Activated CD4-positive, alpha-beta T cell treated with anti-CD3 and anti-CD28 coated beads, Interleukin-2, amount 10 ng/mL, durations not matched to agents 24 days and 14 days (primary cell): ENCODE measurements at regions of chr5 and their contacts with region 1.

Region 1: GRCh38 chr5:37111426-37112382 is 137.5 kb downstream of the CPLANE1 start:
- DNase-seq: peak; percentile 87
- H3K4me3 Mint-ChIP-seq: peak overlapping the region; percentile 52
- H3K27ac Mint-ChIP-seq: peak overlapping the region; percentile 78
- H3K4me1 Mint-ChIP-seq: peaks cover 34% of the 10 kb centered on the region
- H3K27me3 Mint-ChIP-seq: no peaks in the 10 kb centered on the region

Region 2: DNA sequence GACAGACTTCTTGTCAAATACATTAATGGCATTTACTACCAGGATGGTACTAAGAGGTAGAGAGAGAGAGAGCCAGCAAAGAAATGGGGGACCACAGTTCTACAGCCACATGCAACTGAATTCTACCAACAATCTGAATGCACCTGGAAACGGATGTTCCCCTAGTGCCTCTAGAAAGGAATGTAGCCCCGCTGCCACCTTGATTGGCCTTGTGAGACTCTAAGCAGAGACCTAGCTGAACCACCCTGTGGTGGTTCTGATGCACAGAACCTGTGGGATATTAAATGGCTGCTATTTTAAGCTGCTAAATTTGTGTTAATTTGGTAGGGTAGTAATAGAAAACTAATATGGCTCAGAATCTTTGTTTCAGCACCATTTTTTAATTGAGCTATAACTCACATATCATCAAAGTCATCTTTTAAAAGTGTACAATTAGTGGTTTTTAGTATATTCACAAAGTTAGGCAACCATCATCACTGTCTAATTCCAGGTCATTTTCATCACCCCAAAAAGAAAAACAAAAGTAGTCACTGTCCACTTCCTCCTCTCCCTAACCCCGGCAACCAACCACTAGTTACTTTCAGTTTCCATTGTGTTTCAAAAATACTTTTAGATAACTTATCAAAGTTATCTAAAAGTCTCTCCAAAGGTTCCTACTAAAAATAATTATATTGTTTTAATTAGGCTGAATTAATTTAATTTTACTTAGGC is 85.8 kb after region 1 on chr5:
- intact Hi-C with region 1: loop called (anchors 5 kb)
- DNase-seq: peak; percentile 75
- H3K4me3 Mint-ChIP-seq: peak overlapping the region; percentile 72
- H3K27ac Mint-ChIP-seq: peak overlapping the region; percentile 76
- H3K4me1 Mint-ChIP-seq: peaks cover 19% of the 10 kb centered on the region
- H3K27me3 Mint-ChIP-seq: no peaks in the 10 kb centered on the region

Region 3: DNA sequence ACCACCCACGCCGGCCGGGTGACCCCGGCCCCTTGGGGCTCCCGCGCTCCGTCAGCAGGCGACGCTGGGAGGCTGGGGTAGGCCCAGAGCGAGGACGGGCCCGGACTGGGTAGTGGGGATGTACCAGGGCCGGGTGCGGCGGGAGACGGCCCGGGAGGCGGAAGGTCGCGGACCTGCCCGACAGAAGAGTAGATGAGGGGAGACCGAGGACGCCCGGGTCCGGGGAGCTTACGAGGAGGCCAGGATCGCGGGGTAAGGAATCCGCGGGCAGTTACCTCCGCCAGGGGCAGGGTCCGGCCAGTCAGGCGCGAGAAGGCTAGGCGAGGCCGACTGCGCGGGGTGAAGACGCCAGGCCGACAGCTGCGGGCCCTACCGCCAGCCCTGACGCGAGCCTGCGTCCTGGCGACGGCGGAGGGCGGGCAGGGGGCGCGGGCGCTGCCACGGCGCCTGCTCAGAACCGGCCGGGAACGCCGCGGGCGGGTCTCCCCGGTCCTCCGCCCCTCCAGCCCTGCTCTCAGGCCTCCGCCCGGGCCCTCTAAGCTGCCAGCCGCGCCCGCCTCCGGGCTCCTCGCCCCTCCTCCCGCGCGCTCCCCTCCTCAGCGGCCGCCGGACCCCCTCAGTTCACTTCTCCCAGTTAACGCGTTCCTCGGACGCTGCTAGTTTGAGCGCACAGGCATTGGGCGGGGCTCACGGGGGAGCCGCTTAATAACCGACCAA is 137.4 kb after region 1 on chr5 and contains the start of gene CPLANE1:
- intact Hi-C with region 1: loop called (anchors 5 kb)
- DNase-seq: peak; percentile 89
- H3K4me3 Mint-ChIP-seq: peak within 1 kb of the TSS; percentile 88
- H3K27ac Mint-ChIP-seq: peak within 1 kb of the TSS; percentile 75
- H3K4me1 Mint-ChIP-seq: peaks cover 10% of the 10 kb centered on the region
- H3K27me3 Mint-ChIP-seq: no peaks in the 10 kb centered on the region
- total RNA-seq, gene CPLANE1: 7.6 and 7.8 TPM in 2 replicates

Region 4: GRCh38 chr5:37370864-37371726 is 259.4 kb after region 1 on chr5 and contains the start of gene NUP155:
- intact Hi-C with region 1: loop called (anchors 5 kb)
- DNase-seq: peak; percentile 97
- H3K4me3 Mint-ChIP-seq: peak within 1 kb of the TSS; percentile 91
- H3K27ac Mint-ChIP-seq: peak within 1 kb of the TSS; percentile 95
- H3K4me1 Mint-ChIP-seq: peaks cover 23% of the 10 kb centered on the region
- H3K27me3 Mint-ChIP-seq: no peaks in the 10 kb centered on the region
- total RNA-seq, gene NUP155: 85.1 and 86.2 TPM in 2 replicates

Region 5: DNA sequence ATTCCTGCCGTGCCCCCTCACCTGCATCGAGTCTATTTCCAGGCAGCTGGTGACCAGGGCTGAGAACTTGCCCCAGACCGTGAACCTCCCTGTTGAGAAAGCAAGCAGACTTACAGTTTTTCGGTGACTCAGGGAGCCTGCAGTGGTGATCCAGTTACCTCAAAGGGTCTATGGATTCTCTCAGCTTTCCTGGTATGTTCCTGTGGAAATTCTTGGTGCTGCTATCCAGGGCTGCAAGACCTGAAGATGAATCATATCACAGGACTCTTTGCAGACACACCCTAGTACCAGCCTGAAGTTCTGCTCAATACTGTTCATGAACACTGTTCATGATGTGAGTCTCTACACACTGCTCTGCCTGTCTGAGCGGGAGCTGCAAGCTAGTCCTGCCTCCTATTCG is 422.1 kb after region 1 on chr5:
- intact Hi-C with region 1: no loop called
- DNase-seq: no peak
- H3K4me3 Mint-ChIP-seq: no peak overlapping the region
- H3K27ac Mint-ChIP-seq: no peak overlapping the region
- H3K4me1 Mint-ChIP-seq: peaks cover 3% of the 10 kb centered on the region
- H3K27me3 Mint-ChIP-seq: no peaks in the 10 kb centered on the region

Region 6: DNA sequence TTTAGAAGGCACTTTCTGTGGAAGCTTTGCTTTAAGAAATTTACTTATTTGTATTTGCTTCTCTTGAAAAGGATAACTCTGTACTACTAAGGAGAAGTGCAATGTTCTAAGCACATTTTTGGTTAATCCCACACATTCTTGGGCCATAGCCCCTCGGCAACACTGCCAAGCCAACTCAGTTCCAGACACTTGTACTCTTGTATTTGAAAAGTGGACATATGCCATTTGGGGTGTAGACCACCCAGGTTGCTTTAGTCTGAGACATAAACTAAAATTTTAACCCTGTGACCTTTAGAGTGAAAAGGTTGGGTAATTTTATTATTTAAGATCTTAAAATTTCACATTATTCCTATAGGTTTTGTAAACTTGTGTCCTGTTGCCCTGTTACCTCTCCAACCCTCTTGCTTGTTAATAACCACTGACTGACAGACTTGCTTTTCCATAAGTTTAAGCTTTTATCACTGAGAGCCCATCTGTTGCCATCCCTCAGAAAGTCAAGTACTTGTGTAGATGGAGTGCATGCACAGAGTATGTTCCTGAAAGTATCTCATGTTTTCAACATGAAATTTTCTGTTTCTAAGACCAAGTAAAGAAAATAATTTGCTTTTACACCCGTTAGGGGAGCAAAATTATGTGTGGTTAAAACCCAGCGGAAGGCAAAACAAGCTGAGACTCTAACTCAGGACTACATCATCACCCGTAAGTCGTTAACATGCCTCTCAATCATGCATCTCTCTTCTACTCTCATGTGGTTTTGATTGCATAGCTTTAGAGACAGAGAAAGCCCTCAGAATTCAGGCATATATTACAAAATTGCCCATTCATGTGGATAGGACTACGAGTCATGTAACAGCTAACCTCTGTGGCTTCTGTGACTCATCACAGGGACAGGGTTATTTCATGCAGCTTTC is 610.8 kb after region 1 on chr5:
- intact Hi-C with region 1: loop called (anchors 1 kb)
- DNase-seq: peak; percentile 83
- H3K4me3 Mint-ChIP-seq: peak overlapping the region; percentile 81
- H3K27ac Mint-ChIP-seq: peak overlapping the region; percentile 95
- H3K4me1 Mint-ChIP-seq: peaks cover 29% of the 10 kb centered on the region
- H3K27me3 Mint-ChIP-seq: no peaks in the 10 kb centered on the region

Region 7: GRCh38 chr5:37738057-37738691 is 626.5 kb after region 1 on chr5:
- intact Hi-C with region 1: loop called (anchors 5 kb)
- DNase-seq: peak; percentile 75
- H3K4me3 Mint-ChIP-seq: peak overlapping the region; percentile 62
- H3K27ac Mint-ChIP-seq: peak overlapping the region; percentile 85
- H3K4me1 Mint-ChIP-seq: peaks cover 26% of the 10 kb centered on the region
- H3K27me3 Mint-ChIP-seq: no peaks in the 10 kb centered on the region

Region 8: GRCh38 chr5:38556599-38557305 is 1445.0 kb after region 1 on chr5 and contains the start of gene LIFR:
- intact Hi-C with region 1: no loop called
- DNase-seq: peak; percentile 87
- H3K4me3 Mint-ChIP-seq: peak within 1 kb of the TSS; percentile 88
- H3K27ac Mint-ChIP-seq: peak within 1 kb of the TSS; percentile 67
- H3K4me1 Mint-ChIP-seq: peaks cover 7% of the 10 kb centered on the region
- H3K27me3 Mint-ChIP-seq: peaks cover 66% of the 10 kb centered on the region
- total RNA-seq, gene LIFR: 0.12 TPM in 2 replicates

Region 9: GRCh38 chr5:38734353-38734752 is 1622.6 kb after region 1 on chr5:
- intact Hi-C with region 1: no loop called
- DNase-seq: no peak
- H3K4me3 Mint-ChIP-seq: no peak overlapping the region
- H3K27ac Mint-ChIP-seq: no peak overlapping the region
- H3K4me1 Mint-ChIP-seq: no peaks in the 10 kb centered on the region
- H3K27me3 Mint-ChIP-seq: peaks cover 4% of the 10 kb centered on the region